Activated naive CD4-positive, alpha-beta T cell treated with anti-CD3 and anti-CD28 coated beads for 36 hours (primary cell): ENCODE measurements at regions of chr11 and their contacts with region 1.

Region 1: GRCh38 chr11:46367244-46367915 is 14.1 kb upstream of the MDK start:
- DNase-seq: peak; percentile 85
- H3K4me3 Mint-ChIP-seq: no peak overlapping the region
- H3K27ac Mint-ChIP-seq: peak overlapping the region; percentile 80
- H3K4me1 Mint-ChIP-seq: peaks cover 29% of the 10 kb centered on the region
- H3K27me3 Mint-ChIP-seq: no peaks in the 10 kb centered on the region

Region 2: GRCh38 chr11:46229230-46229629 is 138.2 kb before region 1 on chr11:
- CTCF ChIA-PET with region 1: no interaction called
- intact Hi-C with region 1: no loop called
- DNase-seq: no peak
- H3K4me3 Mint-ChIP-seq: no peak overlapping the region
- H3K27ac Mint-ChIP-seq: no peak overlapping the region
- H3K4me1 Mint-ChIP-seq: no peaks in the 10 kb centered on the region
- H3K27me3 Mint-ChIP-seq: peaks cover 14% of the 10 kb centered on the region

Region 3: GRCh38 chr11:46332568-46333393 is 34.6 kb before region 1 on chr11:
- CTCF ChIA-PET with region 1: interaction called, 14 read pairs
- intact Hi-C with region 1: no loop called
- DNase-seq: peak; percentile 62
- H3K4me3 Mint-ChIP-seq: peak overlapping the region; percentile 80
- H3K27ac Mint-ChIP-seq: no peak overlapping the region
- H3K4me1 Mint-ChIP-seq: peaks cover 76% of the 10 kb centered on the region
- H3K27me3 Mint-ChIP-seq: no peaks in the 10 kb centered on the region

Region 4: GRCh38 chr11:46352063-46352841 is 15.1 kb before region 1 on chr11:
- CTCF ChIA-PET with region 1: interaction called, 368 read pairs
- intact Hi-C with region 1: loop called (anchors 1 kb)
- DNase-seq: peak; percentile 81
- H3K4me3 Mint-ChIP-seq: peak overlapping the region; percentile 77
- H3K27ac Mint-ChIP-seq: peak overlapping the region; percentile 90
- H3K4me1 Mint-ChIP-seq: peaks cover 77% of the 10 kb centered on the region
- H3K27me3 Mint-ChIP-seq: no peaks in the 10 kb centered on the region

Region 5: DNA sequence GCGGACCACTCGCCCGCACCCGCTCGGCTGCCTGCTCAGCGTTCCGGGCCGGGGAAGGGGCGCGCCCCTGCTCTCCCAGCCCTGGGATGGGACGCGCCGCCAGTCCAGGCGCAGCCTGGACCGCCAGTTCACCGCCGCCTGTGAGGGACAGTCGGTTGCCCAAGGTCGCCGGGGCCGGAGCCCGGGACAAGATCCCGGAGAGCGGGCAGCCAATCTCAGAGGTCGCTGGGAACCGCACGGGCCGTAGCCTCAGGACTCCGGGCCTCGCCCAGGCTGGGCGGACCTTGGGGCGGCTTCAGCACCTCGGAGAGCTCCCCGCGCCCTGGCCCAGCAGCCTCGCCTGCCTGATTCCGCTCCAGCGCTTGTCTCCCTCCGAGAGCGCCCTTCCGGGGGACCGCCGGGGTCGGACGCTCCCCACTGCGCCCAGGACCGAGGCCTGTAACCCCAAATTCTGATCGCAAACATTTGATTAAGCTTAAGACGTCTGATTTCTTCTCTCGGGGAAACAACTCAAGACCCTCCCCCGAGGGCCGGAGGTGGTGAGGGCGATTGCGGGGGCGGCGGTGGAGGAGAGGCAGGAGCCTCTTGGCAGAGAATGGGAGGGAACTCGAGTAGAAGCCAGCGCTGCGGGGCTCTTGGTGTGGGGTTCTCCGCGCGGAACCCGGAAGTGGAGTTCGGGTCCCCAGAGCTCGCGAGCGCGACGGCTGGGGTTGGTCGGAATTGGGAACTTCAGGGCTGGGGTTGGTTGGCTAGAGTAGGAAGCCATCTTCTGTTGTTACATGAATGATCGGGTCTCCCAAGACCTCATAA is 25.2 kb after region 1 on chr11:
- CTCF ChIA-PET with region 1: interaction called, 10 read pairs
- intact Hi-C with region 1: no loop called
- DNase-seq: peak; percentile 82
- H3K4me3 Mint-ChIP-seq: peak overlapping the region; percentile 66
- H3K27ac Mint-ChIP-seq: no peak overlapping the region
- H3K4me1 Mint-ChIP-seq: peaks cover 25% of the 10 kb centered on the region
- H3K27me3 Mint-ChIP-seq: peaks cover 43% of the 10 kb centered on the region

Region 6: DNA sequence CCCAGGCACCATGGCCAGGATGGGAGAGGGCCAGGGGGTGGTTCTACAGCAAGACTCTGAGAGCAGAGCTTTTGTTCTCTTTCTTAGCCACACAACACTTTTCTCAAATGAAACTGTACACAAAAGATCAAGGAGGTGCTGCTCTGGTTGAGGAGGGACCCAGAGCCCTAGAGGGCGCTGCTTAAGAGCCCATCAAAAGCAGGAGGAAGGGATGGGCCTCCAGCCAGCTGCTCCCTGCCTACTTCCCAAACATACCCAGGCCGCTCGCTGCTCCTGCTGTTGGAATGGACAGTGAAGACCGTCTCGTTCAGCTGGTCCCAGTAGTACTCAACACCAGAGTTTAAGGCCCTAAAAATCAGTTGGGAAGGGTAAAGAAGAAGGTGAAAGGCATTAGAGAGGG is 42.6 kb after region 1 on chr11:
- CTCF ChIA-PET with region 1: no interaction called
- intact Hi-C with region 1: no loop called
- DNase-seq: no peak
- H3K4me3 Mint-ChIP-seq: no peak overlapping the region
- H3K27ac Mint-ChIP-seq: no peak overlapping the region
- H3K4me1 Mint-ChIP-seq: peaks cover 10% of the 10 kb centered on the region
- H3K27me3 Mint-ChIP-seq: no peaks in the 10 kb centered on the region

Region 7: DNA sequence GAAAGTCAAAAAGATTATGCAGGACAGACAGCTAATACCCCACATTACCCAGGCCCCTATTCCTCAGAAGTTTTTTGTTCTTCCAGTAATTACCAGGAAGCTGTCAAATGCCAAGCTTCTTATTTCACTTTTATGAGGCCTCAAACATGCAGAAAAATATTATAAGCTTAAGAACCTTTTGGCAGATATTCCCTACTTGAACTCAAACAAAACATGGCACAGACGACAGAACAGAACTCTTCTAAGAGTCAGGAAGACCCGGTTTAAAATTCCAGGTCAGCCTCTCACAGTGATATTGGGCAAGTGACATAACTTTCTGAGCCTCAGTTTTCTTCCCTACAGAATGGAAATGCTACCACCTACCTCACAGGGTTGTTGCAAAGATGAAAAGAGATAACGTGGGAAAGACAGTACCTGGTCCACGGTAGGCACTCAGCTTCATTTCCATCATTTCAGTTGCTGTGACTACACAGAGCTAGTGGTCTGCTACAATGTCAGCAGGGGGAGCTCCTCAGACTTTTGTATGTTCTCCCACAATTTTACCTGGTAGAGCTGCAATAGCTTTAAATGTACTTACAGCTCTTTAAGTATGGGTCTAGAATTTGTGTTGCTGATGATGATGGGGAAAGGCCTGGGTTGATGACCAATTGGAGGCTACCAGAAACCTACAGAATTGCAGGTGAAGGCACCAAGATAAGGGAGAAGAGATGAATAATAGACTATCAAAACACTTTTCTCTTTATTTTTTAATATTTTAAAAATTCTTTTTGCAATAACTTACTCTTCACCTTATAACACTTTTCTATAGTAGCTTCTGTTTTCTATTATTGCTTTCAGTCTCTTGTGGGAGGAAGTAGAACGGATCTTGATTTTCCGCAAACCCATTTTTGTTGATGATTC is 122.5 kb after region 1 on chr11:
- CTCF ChIA-PET with region 1: no interaction called
- intact Hi-C with region 1: no loop called
- DNase-seq: peak; percentile 45
- H3K4me3 Mint-ChIP-seq: no peak overlapping the region
- H3K27ac Mint-ChIP-seq: no peak overlapping the region
- H3K4me1 Mint-ChIP-seq: no peaks in the 10 kb centered on the region
- H3K27me3 Mint-ChIP-seq: no peaks in the 10 kb centered on the region